ENCODE measurements at regions of chr10 and their contacts with region 1.

Region 1: DNA sequence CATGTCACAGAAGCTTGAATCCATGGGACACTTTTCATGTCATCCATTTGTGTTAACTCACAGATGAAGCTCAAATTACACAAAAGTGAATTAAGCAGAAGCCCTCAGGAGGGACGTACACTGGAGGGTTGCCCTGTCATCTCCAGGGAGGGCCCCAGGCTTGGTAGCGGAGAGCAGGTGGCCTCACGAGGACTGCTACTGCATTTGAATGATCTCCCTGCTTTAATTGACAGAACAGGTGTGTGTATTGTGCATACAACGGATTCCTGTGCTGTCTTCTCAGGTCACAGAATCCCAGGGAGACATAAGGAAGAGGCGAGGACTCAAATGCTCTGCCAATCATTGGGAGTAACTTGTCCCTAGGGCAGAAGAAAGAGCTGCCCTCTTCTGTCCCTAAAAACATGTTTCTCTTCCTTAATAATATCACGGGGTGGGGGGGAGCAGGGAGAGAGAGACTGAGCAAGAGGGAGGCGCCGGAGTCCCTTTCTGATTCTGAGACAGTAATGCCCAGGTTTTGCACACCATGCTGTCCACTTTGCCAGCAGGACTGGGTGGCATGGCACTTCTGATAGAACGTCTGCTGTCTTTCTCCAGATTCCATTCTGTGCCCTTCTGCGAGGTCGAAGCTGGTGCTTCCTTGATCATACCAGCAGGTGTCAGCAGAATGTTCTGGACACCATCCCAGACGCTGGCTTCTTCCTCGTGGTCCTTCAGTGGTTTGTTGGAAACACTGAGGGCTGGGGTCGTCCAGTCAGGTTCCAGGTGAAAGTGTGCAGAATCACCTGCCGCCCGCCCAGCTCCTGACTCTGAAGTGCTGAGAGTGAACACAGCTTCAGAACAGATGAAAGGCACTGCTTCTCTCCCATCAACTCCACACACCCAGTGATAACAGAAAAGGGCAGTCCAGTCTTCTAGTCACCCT is 26.2 kb upstream of the RASGEF1A start:
- DNase-seq: peak; percentile 65
- H3K4me3 ChIP-seq: no peak overlapping the region
- H3K27ac ChIP-seq: no peak overlapping the region
- H3K4me1 ChIP-seq: peaks cover 0 to 1% (median 0%) of the 10 kb centered on the region in 4 donors
- H3K27me3 ChIP-seq: peaks cover 9% of the 10 kb centered on the region
- CTCF ChIP-seq: peak; percentile 69 to 77 (median 74)
- EP300 ChIP-seq: no peak
- POLR2A ChIP-seq: no peak

Region 2: GRCh38 chr10:42428534-42428933 is 864.5 kb before region 1 on chr10:
- in situ Hi-C with region 1: no loop called
- intact Hi-C with region 1: no loop called
- DNase-seq: no peak
- H3K4me3 ChIP-seq: no peak overlapping the region
- H3K27ac ChIP-seq: no peak overlapping the region
- H3K4me1 ChIP-seq: no peaks in the 10 kb centered on the region
- H3K27me3 ChIP-seq: no peaks in the 10 kb centered on the region
- CTCF ChIP-seq: peak in 3 of 5 experiments; percentile 3 to 8 (median 7)
- EP300 ChIP-seq: no peak
- POLR2A ChIP-seq: no peak

Region 3: GRCh38 chr10:43348511-43349312 is 55.7 kb after region 1 on chr10:
- in situ Hi-C with region 1: loop called (anchors 5 to 10 kb)
- intact Hi-C with region 1: loop called (anchors 5 kb)
- DNase-seq: peak; percentile 91
- H3K4me3 ChIP-seq: no peak overlapping the region
- H3K27ac ChIP-seq: no peak overlapping the region
- H3K4me1 ChIP-seq: peaks cover 0 to 6% (median 5%) of the 10 kb centered on the region in 4 donors
- H3K27me3 ChIP-seq: peaks cover 6% of the 10 kb centered on the region
- CTCF ChIP-seq: peak; percentile 85 to 92 (median 90)
- EP300 ChIP-seq: no peak
- POLR2A ChIP-seq: no peak

Region 4: DNA sequence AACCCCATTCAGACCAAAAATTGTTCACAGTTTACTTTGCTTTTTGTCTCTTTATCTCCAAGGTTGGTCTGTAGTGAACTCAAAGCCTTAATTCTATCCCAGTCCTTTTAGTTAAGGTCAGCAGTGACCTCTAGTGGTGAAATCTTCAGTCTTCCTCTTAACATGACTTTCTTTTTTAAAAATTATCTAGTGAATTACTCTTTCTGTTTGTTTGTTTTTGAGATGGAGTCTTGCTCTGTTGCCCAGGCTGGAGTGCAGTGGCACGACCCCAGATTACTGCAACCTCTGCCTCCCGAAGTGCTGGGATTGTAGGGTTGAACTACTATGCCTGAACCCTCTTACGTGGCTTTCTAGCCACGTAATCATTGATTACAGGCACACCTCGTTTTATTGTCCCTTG is 168.9 kb after region 1 on chr10:
- in situ Hi-C with region 1: loop called in 3 of 4 experiments (anchors 5 to 10 kb)
- intact Hi-C with region 1: loop called (anchors 5 kb)
- DNase-seq: no peak
- H3K4me3 ChIP-seq: peak overlapping the region in 3 of 4 donors; percentile 8 to 37 (median 16)
- H3K27ac ChIP-seq: peak overlapping the region in 1 of 4 donors; percentile 12
- H3K4me1 ChIP-seq: peaks cover 0 to 8% (median 4%) of the 10 kb centered on the region in 4 donors
- H3K27me3 ChIP-seq: no peaks in the 10 kb centered on the region
- CTCF ChIP-seq: peak; percentile 69 to 81 (median 74)
- EP300 ChIP-seq: no peak
- POLR2A ChIP-seq: no peak